Esophagus muscularis mucosa (tissue), 4 donors: ENCODE measurements at regions of chr10 and their contacts with region 1.

Region 1: DNA sequence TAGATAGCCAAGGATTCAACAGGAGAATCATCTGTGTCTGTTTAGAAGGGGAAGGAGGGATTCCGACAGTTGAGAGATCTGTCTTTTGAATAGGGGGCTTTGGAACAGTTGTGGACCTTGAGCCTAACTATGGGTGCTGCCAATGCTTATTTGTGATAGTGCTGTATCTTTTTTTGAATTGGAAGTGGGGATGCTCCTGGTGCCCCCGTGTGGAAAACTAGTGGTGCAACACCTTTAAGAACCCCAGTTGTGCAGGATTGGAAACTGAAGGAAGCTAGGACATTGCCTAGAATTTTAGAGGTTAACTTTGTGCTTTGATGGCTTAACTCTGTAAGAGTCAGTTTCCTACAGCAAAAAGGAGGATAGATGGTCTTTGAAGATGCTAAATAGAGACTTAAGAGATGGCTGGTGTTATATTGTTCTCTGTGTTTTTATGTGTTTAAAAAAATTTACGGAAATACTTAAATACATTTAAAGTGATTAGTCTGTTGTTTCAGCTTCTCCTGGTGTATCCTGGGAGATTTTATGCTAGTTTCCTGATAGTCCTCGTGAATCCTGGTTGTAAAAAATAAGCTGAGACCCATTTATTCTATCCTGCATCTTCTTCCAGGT is 69.3 kb downstream of the AP3M1 start:
- DNase-seq: peak; percentile 90
- H3K4me3 ChIP-seq: no peak overlapping the region
- H3K27ac ChIP-seq: peak overlapping the region; percentile 16 to 47 (median 30)
- H3K4me1 ChIP-seq: peaks cover 43 to 74% (median 65%) of the 10 kb centered on the region in 4 donors
- H3K27me3 ChIP-seq: no peaks in the 10 kb centered on the region
- CTCF ChIP-seq: peak; percentile 72 to 82 (median 79)
- EP300 ChIP-seq: no peak
- POLR2A ChIP-seq: no peak

Region 2: GRCh38 chr10:73517271-73517877 is 563.9 kb before region 1 on chr10:
- intact Hi-C with region 1: no loop called
- DNase-seq: no peak
- H3K4me3 ChIP-seq: no peak overlapping the region
- H3K27ac ChIP-seq: no peak overlapping the region
- H3K4me1 ChIP-seq: no peaks in the 10 kb centered on the region
- H3K27me3 ChIP-seq: no peaks in the 10 kb centered on the region
- CTCF ChIP-seq: no peak
- EP300 ChIP-seq: no peak
- POLR2A ChIP-seq: no peak

Region 3: GRCh38 chr10:73886085-73886529 is 195.2 kb before region 1 on chr10:
- intact Hi-C with region 1: loop called (anchors 5 kb)
- DNase-seq: no peak
- H3K4me3 ChIP-seq: no peak overlapping the region
- H3K27ac ChIP-seq: peak overlapping the region; percentile 82 to 87 (median 85)
- H3K4me1 ChIP-seq: peaks cover 32 to 35% (median 34%) of the 10 kb centered on the region in 4 donors
- H3K27me3 ChIP-seq: no peaks in the 10 kb centered on the region
- CTCF ChIP-seq: peak; percentile 83 to 93 (median 91)
- EP300 ChIP-seq: no peak
- POLR2A ChIP-seq: no peak

Region 4: GRCh38 chr10:73940634-73941221 is 140.6 kb before region 1 on chr10:
- intact Hi-C with region 1: loop called (anchors 10 kb)
- DNase-seq: peak; percentile 94
- H3K4me3 ChIP-seq: peak overlapping the region; percentile 7 to 23 (median 22)
- H3K27ac ChIP-seq: peak overlapping the region in 3 of 4 donors; percentile 53 to 61 (median 58)
- H3K4me1 ChIP-seq: peaks cover 17 to 28% (median 27%) of the 10 kb centered on the region in 4 donors
- H3K27me3 ChIP-seq: no peaks in the 10 kb centered on the region
- CTCF ChIP-seq: peak in 2 of 3 experiments; percentile 88 to 96
- EP300 ChIP-seq: no peak
- POLR2A ChIP-seq: no peak

Region 5: GRCh38 chr10:73997787-73998622 is 83.3 kb before region 1 on chr10 and contains the start of gene VCL:
- intact Hi-C with region 1: loop called (anchors 5 kb)
- DNase-seq: peak; percentile 100
- H3K4me3 ChIP-seq: peak within 1 kb of the TSS; percentile 82 to 93 (median 90)
- H3K27ac ChIP-seq: peak within 1 kb of the TSS; percentile 95 to 97 (median 97)
- H3K4me1 ChIP-seq: peaks cover 10 to 46% (median 43%) of the 10 kb centered on the region in 4 donors
- H3K27me3 ChIP-seq: no peaks in the 10 kb centered on the region
- CTCF ChIP-seq: no peak
- EP300 ChIP-seq: no peak
- POLR2A ChIP-seq: peak; percentile 97
- total RNA-seq, gene VCL: 412 to 555 (median 448) TPM

Region 6: GRCh38 chr10:74008212-74008731 is 73.0 kb before region 1 on chr10:
- intact Hi-C with region 1: loop called (anchors 5 kb)
- DNase-seq: no peak
- H3K4me3 ChIP-seq: no peak overlapping the region
- H3K27ac ChIP-seq: peak overlapping the region; percentile 12 to 42 (median 26)
- H3K4me1 ChIP-seq: peaks cover 72 to 100% (median 98%) of the 10 kb centered on the region in 4 donors
- H3K27me3 ChIP-seq: no peaks in the 10 kb centered on the region
- CTCF ChIP-seq: no peak
- EP300 ChIP-seq: no peak
- POLR2A ChIP-seq: no peak